ENCODE measurements at regions of chr11 and their contacts with region 1.

Region 1: GRCh38 chr11:18332302-18332701 is 9.9 kb downstream of the GTF2H1 start:
- DNase-seq: no peak
- ATAC-seq: no peak
- H3K4me3 ChIP-seq: no peak overlapping the region
- H3K27ac ChIP-seq: no peak overlapping the region
- H3K4me1 ChIP-seq: no peaks in the 10 kb centered on the region
- H3K27me3 ChIP-seq: no peaks in the 10 kb centered on the region
- CTCF ChIP-seq: no peak

Region 2: GRCh38 chr11:18368221-18368620 is 35.9 kb after region 1 on chr11:
- intact Hi-C with region 1: no loop called
- DNase-seq: no peak
- ATAC-seq: peak in 2 of 4 donors; percentile 56 to 70
- H3K4me3 ChIP-seq: no peak overlapping the region
- H3K27ac ChIP-seq: peak overlapping the region; percentile 43
- H3K4me1 ChIP-seq: peaks cover 6% of the 10 kb centered on the region
- H3K27me3 ChIP-seq: no peaks in the 10 kb centered on the region
- CTCF ChIP-seq: no peak

Region 3: DNA sequence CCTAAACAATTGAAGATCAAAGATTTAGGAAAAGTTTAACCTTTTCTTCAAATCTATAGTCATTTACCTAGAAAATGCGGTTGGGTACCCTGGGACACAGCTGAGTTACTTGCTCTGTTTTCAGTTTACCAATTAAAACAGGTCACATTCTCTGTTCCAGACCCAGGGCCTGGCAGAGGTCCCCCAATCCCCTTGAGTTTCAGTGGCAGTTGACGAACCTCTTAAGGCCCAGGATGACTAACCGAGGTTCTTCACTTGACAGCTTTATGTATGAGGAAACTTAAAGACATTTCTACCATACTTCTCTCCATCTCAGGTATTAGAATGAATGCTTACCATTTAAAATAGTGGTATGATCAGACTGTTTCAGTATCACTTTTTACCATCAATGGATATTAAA is 139.7 kb after region 1 on chr11:
- intact Hi-C with region 1: loop called in 1 of 2 experiments (anchors 10 kb)
- DNase-seq: no peak
- ATAC-seq: no peak
- H3K4me3 ChIP-seq: no peak overlapping the region
- H3K27ac ChIP-seq: no peak overlapping the region
- H3K4me1 ChIP-seq: no peaks in the 10 kb centered on the region
- H3K27me3 ChIP-seq: no peaks in the 10 kb centered on the region
- CTCF ChIP-seq: no peak

Region 4: GRCh38 chr11:18501629-18502028 is 169.3 kb after region 1 on chr11:
- intact Hi-C with region 1: loop called in 1 of 2 experiments (anchors 10 kb)
- DNase-seq: no peak
- ATAC-seq: no peak
- H3K4me3 ChIP-seq: no peak overlapping the region
- H3K27ac ChIP-seq: no peak overlapping the region
- H3K4me1 ChIP-seq: no peaks in the 10 kb centered on the region
- H3K27me3 ChIP-seq: no peaks in the 10 kb centered on the region
- CTCF ChIP-seq: no peak